ENCODE measurements at regions of chr1 and their contacts with region 1.

Region 1: DNA sequence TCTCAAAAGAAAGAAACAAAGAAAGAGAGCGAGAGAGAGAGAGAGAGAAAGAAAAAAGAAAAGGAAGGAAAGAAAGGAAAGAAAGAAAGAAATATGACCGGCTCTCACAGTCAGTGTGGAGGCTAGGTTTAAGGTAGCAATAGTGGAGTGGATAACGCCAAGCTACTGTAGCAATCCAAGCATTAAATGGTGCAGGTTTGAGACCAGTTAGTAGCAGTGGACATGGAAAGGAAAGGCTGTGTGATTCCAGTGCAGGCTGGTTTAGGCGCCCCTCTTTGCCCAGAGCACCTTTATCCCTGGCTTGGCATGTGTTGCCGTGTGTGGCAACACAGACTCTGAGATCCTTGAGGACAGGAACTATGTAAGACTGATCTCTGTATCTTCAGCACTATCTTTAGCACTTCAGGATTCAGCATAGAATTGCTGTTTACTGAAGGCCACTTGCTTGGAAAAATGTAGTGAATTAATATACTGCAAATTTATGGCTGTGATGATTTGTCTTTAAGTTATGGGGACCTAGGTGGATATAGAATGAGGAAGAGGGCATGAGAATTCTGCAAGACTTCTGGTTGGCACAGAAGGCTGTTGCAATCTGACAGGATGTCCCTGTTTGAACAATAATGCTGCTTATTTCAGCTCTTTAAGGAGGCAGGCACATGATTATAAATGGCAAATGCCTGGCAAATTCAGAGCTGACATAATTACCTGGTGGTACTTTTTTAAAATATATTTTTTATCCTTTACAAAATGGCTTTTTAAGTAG is 10.8 kb upstream of the OSBPL9 start:
- DNase-seq: no peak
- ATAC-seq: peak; percentile 70
- H3K4me3 ChIP-seq: no peak overlapping the region
- H3K27ac ChIP-seq: peak overlapping the region; percentile 58
- H3K4me1 ChIP-seq: peaks cover 12% of the 10 kb centered on the region
- H3K27me3 ChIP-seq: no peaks in the 10 kb centered on the region
- CTCF ChIP-seq: no peak

Region 2: DNA sequence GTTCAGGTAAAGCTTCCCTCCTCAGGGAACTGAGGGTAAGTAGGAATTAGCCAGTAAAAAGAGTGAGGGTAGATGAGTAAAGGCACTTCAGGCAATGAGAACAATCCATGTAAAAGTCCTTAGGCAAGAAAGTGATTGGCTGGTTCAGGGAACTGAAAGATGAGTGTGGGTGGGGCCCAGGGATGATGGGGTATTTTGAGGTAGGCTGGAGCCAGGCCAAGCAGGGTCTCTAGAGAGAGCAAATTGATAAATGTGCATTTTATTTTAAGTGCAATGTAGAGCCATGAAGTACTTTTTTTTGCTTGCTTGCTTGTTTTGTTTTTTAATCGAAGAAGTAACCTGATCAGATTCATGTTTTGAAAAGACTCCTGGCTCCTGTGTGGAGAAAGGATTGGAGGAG is 37.2 kb after region 1 on chr1:
- CTCF ChIA-PET with region 1: no interaction called
- POLR2A ChIA-PET with region 1: interaction called, 10 read pairs
- in situ Hi-C with region 1: no loop called
- intact Hi-C with region 1: no loop called
- DNase-seq: no peak
- ATAC-seq: no peak
- H3K4me3 ChIP-seq: no peak overlapping the region
- H3K27ac ChIP-seq: no peak overlapping the region
- H3K4me1 ChIP-seq: peaks cover 16% of the 10 kb centered on the region
- H3K27me3 ChIP-seq: no peaks in the 10 kb centered on the region
- CTCF ChIP-seq: no peak

Measured in Panc1 (cell line).